GM12878 (cell line): ENCODE measurements at regions of chr9 and their contacts with region 1.

Region 1: DNA sequence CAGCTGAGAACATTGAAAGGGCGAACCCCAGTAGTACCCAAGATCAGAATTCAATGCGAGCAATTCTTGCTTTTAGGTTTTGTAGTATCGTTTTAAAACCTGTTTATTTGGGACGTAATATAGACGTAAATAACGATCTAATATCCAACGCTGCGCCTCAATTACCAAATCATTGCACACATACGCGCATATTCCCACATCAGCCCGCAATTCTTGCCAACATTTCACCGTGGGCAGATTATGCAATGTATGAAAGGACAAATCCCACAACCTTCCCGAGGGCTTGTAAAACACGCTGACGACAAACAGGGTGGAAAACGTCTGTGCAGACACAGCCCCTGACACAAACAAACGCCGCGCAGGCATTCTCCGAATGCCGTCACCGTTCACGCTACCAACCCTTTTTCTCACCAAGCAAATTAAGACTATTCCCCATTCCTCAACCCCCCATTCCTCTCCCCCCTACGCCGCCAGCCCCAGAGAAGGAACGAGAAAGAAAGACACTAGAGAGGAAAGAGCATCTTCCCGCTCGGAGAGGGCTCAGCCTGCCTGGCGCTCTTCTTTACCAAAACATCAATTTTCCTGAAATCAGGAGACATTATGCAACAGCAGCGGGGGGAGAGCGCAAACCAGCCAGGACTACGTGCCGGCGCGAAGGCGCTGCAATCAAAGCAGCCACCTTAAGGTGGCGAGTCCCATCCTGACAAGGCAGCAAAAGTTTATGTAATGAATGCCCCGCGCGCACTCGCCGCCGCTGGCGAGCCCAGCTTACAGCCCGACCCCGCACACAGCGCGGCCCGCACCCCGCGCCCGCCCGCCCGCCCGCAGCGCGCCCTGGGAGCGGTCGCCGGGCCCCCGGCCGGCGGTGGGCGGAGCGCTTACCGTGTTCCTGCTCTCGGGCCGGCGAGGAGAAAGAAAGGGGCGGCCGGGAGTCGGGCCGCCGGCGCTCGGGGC is 597 bp downstream of the NFIL3 start:
- DNase-seq: no peak
- ATAC-seq: peak; percentile 52
- H3K4me3 ChIP-seq: peak overlapping the region; percentile 92
- H3K27ac ChIP-seq: no peak overlapping the region
- H3K4me1 ChIP-seq: peaks cover 6% of the 10 kb centered on the region
- H3K27me3 ChIP-seq: peaks cover 12 to 24% of the 10 kb centered on the region in 2 experiments
- CTCF ChIP-seq: peak; percentile 21 to 43 (median 27); a peak in 4 of 6 replicates
- EP300 ChIP-seq: no peak
- POLR2A ChIP-seq: 0 out of 2 replicates have a peak, but pooled peaks have one; percentile 1
- RAD21 ChIP-seq: no peak

Region 2: DNA sequence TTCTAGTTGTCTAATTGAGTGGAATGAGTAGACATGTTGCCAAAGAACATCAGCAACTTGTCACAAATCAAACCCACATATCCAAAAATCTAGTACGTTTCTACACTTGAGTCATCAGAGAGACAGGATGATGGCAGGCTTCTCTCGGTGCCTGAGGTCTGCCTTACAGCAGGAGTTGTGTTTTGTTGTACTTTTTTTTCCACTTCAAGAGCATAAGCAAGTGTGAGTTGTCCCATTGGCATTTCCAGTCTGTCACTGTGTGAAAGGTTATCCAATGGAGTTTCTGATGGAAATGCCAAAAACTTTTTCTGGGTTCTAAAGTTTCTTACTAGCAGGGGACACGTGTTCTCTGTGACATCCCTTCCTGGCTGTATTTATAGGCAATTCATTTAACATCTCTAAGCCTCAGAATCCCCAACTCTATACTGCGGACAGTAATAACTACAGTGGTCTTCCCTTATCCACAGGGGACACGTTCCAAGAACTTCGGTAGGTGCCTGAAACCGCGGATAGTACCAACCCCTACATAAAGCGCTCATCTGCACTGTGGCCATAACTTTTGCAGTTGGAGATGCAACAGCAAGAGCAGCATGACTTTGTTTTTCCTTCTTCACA is 374.9 kb before region 1 on chr9:
- CTCF ChIA-PET with region 1: no interaction called
- POLR2A ChIA-PET with region 1: no interaction called
- RAD21 ChIA-PET with region 1: no interaction called
- SMC1A ChIA-PET with region 1: no interaction called
- in situ Hi-C with region 1: loop called (anchors 5 kb)
- intact Hi-C with region 1: no loop called
- DNase-seq: no peak
- ATAC-seq: no peak
- H3K4me3 ChIP-seq: no peak overlapping the region
- H3K27ac ChIP-seq: no peak overlapping the region
- H3K4me1 ChIP-seq: no peaks in the 10 kb centered on the region
- H3K27me3 ChIP-seq: no peaks in the 10 kb centered on the region; a peak in 1 of 4 replicates
- CTCF ChIP-seq: no peak
- EP300 ChIP-seq: no peak
- POLR2A ChIP-seq: no peak
- RAD21 ChIP-seq: no peak

Region 3: DNA sequence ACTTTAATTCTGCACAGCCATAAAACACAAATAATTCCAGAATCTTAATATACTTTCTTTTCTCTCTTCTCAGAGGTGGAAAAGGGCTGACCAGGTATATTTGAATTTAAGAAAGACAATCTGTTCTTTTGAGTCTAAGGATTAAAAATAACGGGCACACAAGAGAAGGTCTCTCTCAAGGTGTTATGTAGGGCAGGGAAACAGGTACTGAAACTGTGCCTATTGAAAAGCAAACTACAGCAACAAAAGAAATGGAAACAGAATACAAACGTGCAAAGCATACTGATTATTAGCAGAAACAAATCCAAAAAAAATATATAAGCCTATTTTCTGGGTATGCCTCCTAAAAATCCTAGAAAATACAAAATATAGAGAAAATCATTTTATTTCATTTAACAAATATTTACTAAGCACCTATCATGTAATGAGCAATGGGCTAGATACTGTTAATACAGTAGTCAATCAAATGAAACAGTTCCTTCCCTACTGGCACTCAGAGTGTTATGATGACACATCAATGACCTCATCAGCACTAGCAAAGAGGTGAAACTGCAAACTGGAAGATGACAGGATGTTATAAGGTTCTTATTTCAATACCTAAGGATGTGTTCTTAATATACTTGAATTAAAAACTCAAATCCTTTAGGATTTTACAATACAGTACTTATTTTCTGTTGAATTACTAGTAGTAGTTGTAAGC is 149.0 kb before region 1 on chr9:
- CTCF ChIA-PET with region 1: no interaction called
- POLR2A ChIA-PET with region 1: no interaction called
- RAD21 ChIA-PET with region 1: no interaction called
- SMC1A ChIA-PET with region 1: no interaction called
- in situ Hi-C with region 1: no loop called
- intact Hi-C with region 1: loop called (anchors 10 kb)
- DNase-seq: no peak
- ATAC-seq: peak; percentile 79
- H3K4me3 ChIP-seq: no peak overlapping the region
- H3K27ac ChIP-seq: no peak overlapping the region
- H3K4me1 ChIP-seq: peaks cover 8% of the 10 kb centered on the region; the same call in 1 of the 2 replicates
- H3K27me3 ChIP-seq: no peaks in the 10 kb centered on the region
- CTCF ChIP-seq: no peak
- EP300 ChIP-seq: no peak
- POLR2A ChIP-seq: no peak
- RAD21 ChIP-seq: no peak

Region 4: DNA sequence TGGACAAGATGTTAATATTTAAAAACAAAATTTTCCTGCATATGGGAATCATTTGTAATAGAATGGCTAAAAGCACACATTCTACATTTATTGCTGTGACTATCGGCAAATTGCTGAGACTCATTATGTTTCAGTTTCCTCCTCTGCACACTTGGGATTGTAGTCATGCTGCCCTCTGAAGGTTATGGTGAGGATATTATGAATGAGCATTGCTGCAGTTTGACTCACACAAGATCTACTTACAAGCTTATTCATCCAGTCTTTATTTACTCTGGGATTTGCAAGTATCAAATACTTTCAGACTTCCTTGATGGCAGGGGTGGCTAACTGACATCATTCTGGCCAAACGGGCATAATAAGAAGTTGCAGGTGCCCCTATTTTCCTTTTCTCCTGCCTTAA is 10.1 kb after region 1 on chr9:
- CTCF ChIA-PET with region 1: interaction called, 10 read pairs
- POLR2A ChIA-PET with region 1: no interaction called
- RAD21 ChIA-PET with region 1: interaction called, 3 read pairs
- SMC1A ChIA-PET with region 1: no interaction called
- in situ Hi-C with region 1: no loop called
- intact Hi-C with region 1: no loop called
- DNase-seq: no peak
- ATAC-seq: no peak
- H3K4me3 ChIP-seq: no peak overlapping the region
- H3K27ac ChIP-seq: no peak overlapping the region
- H3K4me1 ChIP-seq: no peaks in the 10 kb centered on the region
- H3K27me3 ChIP-seq: peaks cover 0 to 3% of the 10 kb centered on the region in 2 experiments; a peak in 1 of 4 replicates
- CTCF ChIP-seq: peak in 2 of 3 experiments; percentile 12 to 40; a peak in 2 of 6 replicates
- EP300 ChIP-seq: no peak
- POLR2A ChIP-seq: no peak
- RAD21 ChIP-seq: peak; percentile 30; the same call in 1 of the 2 replicates

Region 5: GRCh38 chr9:91727316-91727861 is 304.4 kb after region 1 on chr9:
- CTCF ChIA-PET with region 1: interaction called, 5 read pairs
- POLR2A ChIA-PET with region 1: no interaction called
- RAD21 ChIA-PET with region 1: interaction called, 5 read pairs
- SMC1A ChIA-PET with region 1: no interaction called
- in situ Hi-C with region 1: no loop called
- intact Hi-C with region 1: loop called (anchors 2 kb)
- DNase-seq: no peak
- ATAC-seq: peak; percentile 97
- H3K4me3 ChIP-seq: no peak overlapping the region
- H3K27ac ChIP-seq: no peak overlapping the region
- H3K4me1 ChIP-seq: no peaks in the 10 kb centered on the region
- H3K27me3 ChIP-seq: no peaks in the 10 kb centered on the region; a peak in 1 of 4 replicates
- CTCF ChIP-seq: peak; percentile 63 to 77 (median 71)
- EP300 ChIP-seq: no peak
- POLR2A ChIP-seq: no peak
- RAD21 ChIP-seq: peak; percentile 83